HEK293T (cell line): ENCODE measurements at regions of chr19 and their contacts with region 1.

Region 1: GRCh38 chr19:18322759-18323460 is at the start of gene LSM4:
- DNase-seq: peak; percentile 98

Region 2: DNA sequence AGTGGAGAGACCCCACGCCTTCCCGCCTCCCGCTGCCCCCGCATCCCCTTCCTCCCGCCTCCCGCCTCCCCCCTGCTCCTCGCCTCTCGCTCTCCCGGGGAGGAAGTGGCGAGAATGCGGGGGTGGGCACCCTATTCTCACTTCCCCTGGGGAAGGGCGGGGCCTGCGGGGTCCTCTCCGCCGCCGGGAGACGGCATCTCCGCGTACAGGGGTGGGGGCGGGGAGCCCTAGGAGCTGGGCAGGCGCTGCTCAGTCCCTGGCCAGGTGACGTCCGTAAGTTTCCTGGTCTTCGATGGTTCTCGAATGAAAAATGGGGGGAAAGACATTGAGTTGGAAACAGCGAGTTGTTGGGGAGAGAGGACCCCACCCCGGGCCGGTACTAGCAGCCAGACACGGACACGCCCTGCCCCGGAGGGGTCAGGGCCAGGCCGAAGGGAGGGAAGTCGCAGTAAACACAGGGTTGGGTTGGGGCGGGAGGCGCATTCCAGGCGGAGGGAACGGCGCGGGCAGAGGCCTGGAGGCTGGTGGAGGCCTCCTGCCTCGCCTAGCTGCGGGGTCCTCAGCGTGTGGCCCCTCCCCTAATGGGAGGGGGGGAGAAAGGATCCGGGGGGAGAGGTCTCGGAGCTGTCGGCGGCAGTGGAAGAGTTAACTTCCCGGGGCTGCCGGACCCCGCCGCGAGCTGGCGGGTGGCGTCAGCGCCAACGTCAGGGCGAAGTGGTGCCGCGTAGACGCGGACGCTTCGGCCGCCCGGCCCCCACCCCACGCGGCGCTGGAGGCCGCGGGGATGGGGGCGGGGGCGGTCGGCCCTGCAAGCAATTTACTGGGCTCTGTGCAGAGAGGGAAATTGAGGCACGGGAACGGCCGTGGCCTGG is 31.1 kb before region 1 on chr19:
- CTCF ChIA-PET with region 1: interaction called, 7 read pairs
- POLR2A ChIA-PET with region 1: interaction called, 20 read pairs
- DNase-seq: peak; percentile 70

Region 3: GRCh38 chr19:18304458-18305310 is 18.2 kb before region 1 on chr19:
- CTCF ChIA-PET with region 1: interaction called, 3 read pairs
- POLR2A ChIA-PET with region 1: interaction called, 17 read pairs
- DNase-seq: no peak

Region 4: GRCh38 chr19:18340190-18340989 is 17.5 kb after region 1 on chr19 and contains the start of gene PGPEP1:
- CTCF ChIA-PET with region 1: interaction called, 7 read pairs
- POLR2A ChIA-PET with region 1: interaction called, 12 read pairs
- DNase-seq: peak; percentile 91